H1 (cell line): ENCODE measurements at regions of chr19 and their contacts with region 1.

Region 1: GRCh38 chr19:12610540-12611360 is at the starts of genes ZNF490 and ZNF791:
- DNase-seq: peak; percentile 85 to 97
- H3K4me3 ChIP-seq: peak within 1 kb of the TSS; percentile 50 to 96 (median 82)
- H3K27ac ChIP-seq: peak within 1 kb of the TSS; percentile 89
- H3K4me1 ChIP-seq: peaks cover 0 to 2% (median 0%) of the 10 kb centered on the region in 4 experiments; a peak in 1 of 7 replicates
- H3K27me3 ChIP-seq: no peaks in the 10 kb centered on the region
- CTCF ChIP-seq: peak in 2 of 3 experiments; percentile 8 to 46; a peak in 2 of 4 replicates
- EP300 ChIP-seq: peak in 1 of 2 experiments; percentile 29; a peak in 1 of 3 replicates
- POLR2A ChIP-seq: peak in 1 of 2 experiments; percentile 91; a peak in 2 of 3 replicates
- RAD21 ChIP-seq: no peak
- total RNA-seq, gene ZNF490: 9.0 TPM in 2 replicates
- total RNA-seq, gene ZNF791: 18.6 and 20.1 TPM in 2 replicates

Region 2: DNA sequence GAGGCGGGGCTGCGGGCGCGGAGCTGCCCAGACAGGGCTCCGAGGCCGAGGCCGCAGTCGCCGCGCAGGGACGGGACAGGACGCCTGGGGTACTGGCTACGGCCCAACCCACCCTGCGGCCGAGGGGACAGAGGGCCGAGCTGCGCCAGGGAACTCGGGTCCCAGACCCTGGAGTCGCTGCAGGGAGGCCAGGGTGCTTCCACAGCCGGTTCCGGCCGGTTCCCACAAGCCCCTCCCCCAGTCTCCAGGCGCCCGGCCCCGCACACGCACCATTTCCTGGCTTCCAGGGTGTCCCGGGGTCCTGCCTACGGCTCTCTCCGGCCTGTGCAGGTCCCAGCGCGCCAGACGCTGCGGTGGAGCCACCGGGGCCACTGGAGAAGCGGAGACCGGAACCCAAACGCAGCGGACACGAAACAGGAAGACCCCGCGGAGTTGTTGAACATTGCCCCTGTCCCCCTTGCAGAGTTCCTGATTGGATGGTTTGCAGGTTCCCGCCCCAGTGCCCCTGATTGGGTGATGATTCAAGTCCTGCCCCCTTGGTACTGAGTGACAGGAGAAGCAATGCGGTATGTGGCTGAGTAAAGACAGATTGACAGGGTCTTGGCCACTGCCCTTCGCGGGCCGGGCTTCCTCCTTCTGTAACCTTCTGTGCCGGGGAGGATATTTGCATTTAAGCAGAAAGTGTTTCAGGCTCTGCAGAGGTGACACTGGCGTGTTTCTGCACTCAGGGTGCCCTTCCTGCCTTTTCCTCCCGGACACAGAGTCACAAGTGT is 59.5 kb before region 1 on chr19 and contains the start of gene ZNF564:
- CTCF ChIA-PET with region 1: no interaction called
- POLR2A ChIA-PET with region 1: interaction called, 11 read pairs
- DNase-seq: peak; percentile 90 to 97
- H3K4me3 ChIP-seq: peak within 1 kb of the TSS; percentile 85 to 88 (median 86)
- H3K27ac ChIP-seq: peak within 1 kb of the TSS; percentile 95
- H3K4me1 ChIP-seq: peaks cover 0 to 2% (median 0%) of the 10 kb centered on the region in 4 experiments; a peak in 3 of 7 replicates
- H3K27me3 ChIP-seq: no peaks in the 10 kb centered on the region; a peak in 1 of 7 replicates
- CTCF ChIP-seq: no peak
- EP300 ChIP-seq: no peak
- POLR2A ChIP-seq: peak; percentile 69 to 89
- RAD21 ChIP-seq: no peak
- total RNA-seq, gene ZNF564: 7.8 and 10.4 TPM in 2 replicates

Region 3: GRCh38 chr19:12639901-12640613 is 29.3 kb after region 1 on chr19:
- CTCF ChIA-PET with region 1: interaction called, 6 read pairs
- POLR2A ChIA-PET with region 1: interaction called, 12 read pairs
- DNase-seq: peak; percentile 77 to 93
- H3K4me3 ChIP-seq: peak overlapping the region; percentile 11 to 53 (median 42); a peak in 6 of 8 replicates
- H3K27ac ChIP-seq: no peak overlapping the region
- H3K4me1 ChIP-seq: no peaks in the 10 kb centered on the region; a peak in 2 of 7 replicates
- H3K27me3 ChIP-seq: no peaks in the 10 kb centered on the region
- CTCF ChIP-seq: peak; percentile 75 to 99 (median 94)
- EP300 ChIP-seq: no peak
- POLR2A ChIP-seq: peak in 1 of 2 experiments; percentile 56; a peak in 1 of 3 replicates
- RAD21 ChIP-seq: peak; percentile 56 to 65

Region 4: DNA sequence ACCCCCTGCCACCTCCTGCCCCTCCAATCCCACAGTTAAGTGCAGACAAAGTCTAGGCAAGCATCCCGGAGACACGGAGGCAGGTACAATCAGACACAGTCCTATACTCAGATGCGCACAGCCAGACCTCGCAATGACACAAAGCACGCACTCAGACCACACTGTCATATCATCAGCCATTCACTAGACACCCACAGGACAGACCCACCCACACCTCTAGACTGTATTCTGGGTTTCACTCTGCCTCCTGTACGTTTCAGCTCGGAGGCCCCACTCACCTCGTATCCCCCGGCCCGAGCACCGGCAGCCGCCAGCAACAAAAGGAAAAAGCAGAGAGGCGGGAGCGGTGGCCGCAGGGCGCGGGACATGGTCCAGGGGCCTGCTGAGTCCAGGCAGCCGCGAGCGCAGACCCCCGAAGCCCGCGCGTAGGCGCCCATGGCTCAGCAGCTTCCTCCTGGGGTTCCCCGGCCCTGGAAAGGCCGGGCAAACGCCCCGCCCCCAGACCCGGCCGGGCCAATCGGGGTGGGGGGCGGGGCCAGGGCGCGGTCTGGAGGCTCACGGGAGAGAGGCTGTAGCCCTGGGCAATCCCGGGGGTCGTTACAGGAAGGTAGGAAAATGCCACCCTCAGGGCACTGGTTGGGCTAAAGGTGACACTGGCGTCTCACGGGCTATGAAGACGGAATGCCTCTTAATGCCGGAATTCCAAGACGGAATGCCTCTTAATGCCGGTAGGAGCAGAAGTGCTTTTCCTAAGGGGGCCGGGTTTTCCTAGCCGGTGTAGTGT is 55.7 kb after region 1 on chr19 and contains the starts of genes MAN2B1 and WDR83:
- CTCF ChIA-PET with region 1: interaction called, 13 read pairs
- POLR2A ChIA-PET with region 1: interaction called, 4 read pairs
- DNase-seq: peak in 1 of 2 experiments; percentile 85
- H3K4me3 ChIP-seq: peak within 1 kb of the TSS; percentile 88 to 97 (median 92)
- H3K27ac ChIP-seq: peak within 1 kb of the TSS; percentile 41; the same call in 1 of the 2 replicates
- H3K4me1 ChIP-seq: peaks cover 3 to 22% (median 7%) of the 10 kb centered on the region in 4 experiments
- H3K27me3 ChIP-seq: no peaks in the 10 kb centered on the region; a peak in 1 of 7 replicates
- CTCF ChIP-seq: no peak
- EP300 ChIP-seq: no peak
- POLR2A ChIP-seq: peak in 1 of 2 experiments; percentile 67; a peak in 2 of 3 replicates
- RAD21 ChIP-seq: no peak
- total RNA-seq, gene MAN2B1: 71.1 and 76.3 TPM in 2 replicates
- total RNA-seq, gene WDR83: 15.3 and 19.6 TPM in 2 replicates

Region 5: GRCh38 chr19:12681074-12681951 is 70.6 kb after region 1 on chr19 and contains the start of gene DHPS:
- CTCF ChIA-PET with region 1: interaction called, 4 read pairs
- POLR2A ChIA-PET with region 1: interaction called, 11 read pairs
- DNase-seq: peak; percentile 85 to 96
- H3K4me3 ChIP-seq: peak within 1 kb of the TSS; percentile 81 to 99 (median 90)
- H3K27ac ChIP-seq: peak within 1 kb of the TSS; percentile 98
- H3K4me1 ChIP-seq: peaks cover 0 to 3% (median 0%) of the 10 kb centered on the region in 4 experiments; a peak in 2 of 7 replicates
- H3K27me3 ChIP-seq: no peaks in the 10 kb centered on the region
- CTCF ChIP-seq: no peak
- EP300 ChIP-seq: no peak
- POLR2A ChIP-seq: peak; percentile 63 to 96
- RAD21 ChIP-seq: no peak
- total RNA-seq, gene DHPS: 86.6 and 88.8 TPM in 2 replicates